HEK293T (cell line): ENCODE measurements at regions of chr15 and their contacts with region 1.

Region 1: GRCh38 chr15:64162870-64163658 is at the start of gene PPIB:
- DNase-seq: peak; percentile 87

Region 2: GRCh38 chr15:64369078-64369607 is 206.1 kb after region 1 on chr15:
- CTCF ChIA-PET with region 1: interaction called, 10 read pairs
- POLR2A ChIA-PET with region 1: no interaction called
- DNase-seq: no peak